Vagina (tissue), 2 donors: ENCODE measurements at regions of chr20 and their contacts with region 1.

Region 1: DNA sequence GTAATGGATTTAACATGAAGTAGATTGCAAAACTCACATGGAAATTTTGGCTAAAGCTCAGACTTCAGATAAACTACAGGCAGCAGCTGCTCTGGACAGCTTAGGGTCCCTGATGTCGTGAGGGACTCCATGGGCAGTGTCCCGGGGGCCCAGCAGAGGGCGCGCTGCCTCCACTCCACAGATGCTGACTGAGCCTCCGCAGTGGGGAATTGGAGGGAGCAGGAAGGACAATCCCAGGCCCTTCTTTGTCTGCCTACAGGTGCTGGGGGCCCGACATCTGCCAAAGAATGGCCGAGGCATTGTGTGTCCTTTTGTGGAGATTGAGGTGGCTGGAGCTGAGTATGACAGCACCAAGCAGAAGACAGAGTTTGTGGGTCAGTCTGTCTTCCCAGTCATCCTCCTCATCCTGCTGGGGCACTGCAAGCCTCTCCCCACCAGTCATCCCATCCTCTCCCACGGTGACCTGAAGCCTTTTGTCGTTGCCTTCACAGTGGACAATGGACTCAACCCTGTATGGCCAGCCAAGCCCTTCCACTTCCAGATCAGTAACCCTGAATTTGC is 35.9 kb downstream of the PLCG1 start:
- DNase-seq: peak; percentile 84 to 92
- H3K4me3 ChIP-seq: no peak overlapping the region
- H3K27ac ChIP-seq: peak overlapping the region; percentile 83
- H3K4me1 ChIP-seq: peaks cover 59% of the 10 kb centered on the region
- H3K27me3 ChIP-seq: no peaks in the 10 kb centered on the region
- CTCF ChIP-seq: peak; percentile 94 to 97 (median 97)
- POLR2A ChIP-seq: peak in 1 of 2 donors; percentile 8

Region 2: GRCh38 chr20:41232973-41233926 is 60.0 kb after region 1 on chr20:
- intact Hi-C with region 1: loop called (anchors 2 kb)
- DNase-seq: no peak
- H3K4me3 ChIP-seq: no peak overlapping the region
- H3K27ac ChIP-seq: peak overlapping the region; percentile 74
- H3K4me1 ChIP-seq: peaks cover 43% of the 10 kb centered on the region
- H3K27me3 ChIP-seq: no peaks in the 10 kb centered on the region
- CTCF ChIP-seq: no peak
- POLR2A ChIP-seq: no peak